ENCODE measurements at regions of chr12 and their contacts with region 1.

Region 1: DNA sequence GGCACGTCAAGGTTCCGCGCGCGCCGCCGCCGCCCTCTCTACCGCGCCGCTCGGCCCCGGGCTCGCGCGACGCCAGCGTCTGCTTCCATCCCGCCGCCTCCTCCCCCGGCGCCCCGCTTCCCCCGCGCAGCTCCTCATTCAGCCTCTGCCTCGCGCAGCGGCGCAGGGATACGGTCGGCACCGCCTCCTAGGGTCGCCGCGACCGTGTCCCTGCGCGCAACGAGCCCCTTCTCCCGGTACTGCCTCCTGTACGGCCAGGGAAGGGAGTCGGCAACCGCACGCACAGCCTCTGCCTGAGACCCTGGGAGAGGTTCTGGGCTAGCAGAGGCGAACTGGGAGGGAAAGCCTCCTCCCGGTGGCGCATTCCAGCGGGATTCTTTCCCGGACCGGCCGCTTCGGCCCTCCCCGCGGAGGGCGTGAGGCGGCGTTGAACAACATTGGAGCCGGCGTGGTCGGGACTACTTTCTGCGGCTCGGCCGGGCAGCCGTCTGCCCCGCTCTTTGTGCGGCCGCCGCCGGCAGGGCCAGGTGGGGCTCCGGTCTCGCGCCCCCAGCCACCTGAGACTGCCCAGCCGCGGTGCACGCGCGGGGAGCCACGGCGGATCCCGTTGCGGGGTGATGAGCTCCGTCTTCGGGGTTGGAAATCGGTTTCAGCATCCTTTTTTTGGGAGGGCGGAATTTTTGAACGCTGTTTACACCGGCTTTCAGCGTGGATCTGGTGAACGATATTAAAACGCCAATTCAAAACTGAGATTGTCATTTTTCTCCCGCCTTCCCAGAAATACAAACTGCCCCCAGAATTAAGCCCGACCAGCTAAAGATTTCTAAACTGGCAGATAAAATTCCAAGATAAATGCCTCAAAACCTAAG is at the start of gene LRP6:
- DNase-seq: peak; percentile 80
- ATAC-seq: peak; percentile 94
- H3K4me3 ChIP-seq: peak within 1 kb of the TSS; percentile 90 to 95 (median 93)
- H3K27ac ChIP-seq: peak within 1 kb of the TSS; percentile 100
- H3K4me1 ChIP-seq: peaks cover 33% of the 10 kb centered on the region
- H3K27me3 ChIP-seq: no peaks in the 10 kb centered on the region; a peak in 1 of 5 replicates
- CTCF ChIP-seq: peak; percentile 31; the same call in 1 of the 2 replicates
- EP300 ChIP-seq: no peak
- POLR2A ChIP-seq: peak; percentile 69 to 72
- RAD21 ChIP-seq: 0 out of 2 replicates have a peak, but pooled peaks have one; percentile 20
- total RNA-seq, gene LRP6: 31.7 and 42.0 TPM in 2 replicates

Region 2: GRCh38 chr12:12167847-12168246 is 99.3 kb before region 1 on chr12:
- CTCF ChIA-PET with region 1: no interaction called
- POLR2A ChIA-PET with region 1: no interaction called
- in situ Hi-C with region 1: no loop called
- intact Hi-C with region 1: loop called (anchors 5 kb)
- DNase-seq: peak; percentile 45
- ATAC-seq: peak; percentile 78
- H3K4me3 ChIP-seq: no peak overlapping the region; a peak in 2 of 6 replicates
- H3K27ac ChIP-seq: no peak overlapping the region
- H3K4me1 ChIP-seq: peaks cover 43% of the 10 kb centered on the region
- H3K27me3 ChIP-seq: no peaks in the 10 kb centered on the region
- CTCF ChIP-seq: no peak
- EP300 ChIP-seq: peak in 1 of 2 experiments; percentile 34; a peak in 1 of 4 replicates
- POLR2A ChIP-seq: no peak
- RAD21 ChIP-seq: no peak

Region 3: DNA sequence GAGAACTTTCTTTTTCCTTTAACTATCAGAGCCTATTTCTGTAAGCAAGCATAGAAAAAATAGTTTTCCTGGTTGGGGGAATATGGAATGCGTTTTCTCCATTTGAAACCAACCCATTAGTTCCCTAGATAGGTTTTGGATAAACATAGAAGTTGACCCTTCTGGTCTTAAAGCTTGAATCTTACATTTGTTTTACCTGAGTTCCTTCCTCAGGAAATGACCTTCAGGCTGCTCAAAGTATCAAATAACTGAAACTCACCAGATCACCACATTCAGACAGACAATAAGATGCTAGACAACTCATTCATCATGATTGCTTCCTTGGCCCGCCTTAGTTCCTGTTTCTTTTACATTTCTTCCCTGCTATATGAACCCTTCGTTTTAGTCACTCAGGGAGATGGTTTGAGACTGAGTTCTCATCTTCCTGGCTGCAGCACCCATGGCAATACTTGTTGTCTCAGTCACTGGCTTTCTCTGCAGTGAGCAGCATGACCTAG is 52.4 kb before region 1 on chr12:
- CTCF ChIA-PET with region 1: no interaction called
- POLR2A ChIA-PET with region 1: no interaction called
- in situ Hi-C with region 1: no loop called
- intact Hi-C with region 1: loop called (anchors 5 kb)
- DNase-seq: peak; percentile 24
- ATAC-seq: peak; percentile 81
- H3K4me3 ChIP-seq: peak overlapping the region in 1 of 3 experiments; percentile 20; a peak in 3 of 6 replicates
- H3K27ac ChIP-seq: peak overlapping the region; percentile 84
- H3K4me1 ChIP-seq: peaks cover 94% of the 10 kb centered on the region
- H3K27me3 ChIP-seq: no peaks in the 10 kb centered on the region; a peak in 1 of 5 replicates
- CTCF ChIP-seq: no peak
- EP300 ChIP-seq: peak in 1 of 2 experiments; percentile 27; a peak in 1 of 4 replicates
- POLR2A ChIP-seq: no peak
- RAD21 ChIP-seq: no peak

Region 4: GRCh38 chr12:12319451-12320183 is 52.5 kb after region 1 on chr12:
- CTCF ChIA-PET with region 1: no interaction called
- POLR2A ChIA-PET with region 1: interaction called, 23 read pairs
- in situ Hi-C with region 1: loop called (anchors 10 kb)
- intact Hi-C with region 1: loop called (anchors 1 kb)
- DNase-seq: peak; percentile 30
- ATAC-seq: peak; percentile 30; the same call in 1 of the 3 replicates
- H3K4me3 ChIP-seq: peak overlapping the region; percentile 43 to 57 (median 54); a peak in 4 of 6 replicates
- H3K27ac ChIP-seq: peak overlapping the region; percentile 63
- H3K4me1 ChIP-seq: peaks cover 48% of the 10 kb centered on the region
- H3K27me3 ChIP-seq: no peaks in the 10 kb centered on the region
- CTCF ChIP-seq: no peak
- EP300 ChIP-seq: no peak
- POLR2A ChIP-seq: no peak
- RAD21 ChIP-seq: no peak

Region 5: DNA sequence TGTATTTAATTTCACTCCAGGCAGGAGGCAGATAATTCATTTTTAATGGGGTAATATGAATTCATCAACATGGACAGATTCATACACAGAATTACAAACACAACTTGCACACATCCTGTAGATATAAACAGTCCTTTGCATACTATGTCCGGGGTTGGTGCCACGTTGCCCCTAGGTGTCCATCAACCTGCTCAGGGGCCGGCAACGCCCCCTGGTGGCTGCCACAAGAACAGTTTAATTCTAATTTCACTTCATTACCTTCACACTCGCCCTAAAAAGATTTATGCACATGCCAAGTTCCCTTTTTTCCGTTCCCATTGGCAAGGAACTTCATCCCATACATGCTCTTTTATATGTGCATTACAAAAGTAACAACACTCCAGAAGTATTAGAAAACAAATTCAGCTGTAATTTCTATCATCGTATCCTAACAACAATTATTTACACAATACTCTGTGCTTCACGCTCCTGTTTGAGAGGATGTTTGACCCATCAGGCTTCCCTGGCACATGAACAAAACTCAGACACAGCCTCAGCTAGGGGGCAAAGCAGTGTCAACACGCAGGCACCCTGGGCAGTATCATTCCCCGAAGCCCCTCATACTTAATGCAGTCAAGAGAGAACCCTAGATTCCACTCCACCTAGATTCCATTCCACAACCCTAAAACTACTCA is 67.4 kb after region 1 on chr12:
- CTCF ChIA-PET with region 1: no interaction called
- POLR2A ChIA-PET with region 1: no interaction called
- in situ Hi-C with region 1: loop called (anchors 10 kb)
- intact Hi-C with region 1: loop called (anchors 2 kb)
- DNase-seq: peak; percentile 53
- ATAC-seq: peak; percentile 88
- H3K4me3 ChIP-seq: no peak overlapping the region
- H3K27ac ChIP-seq: no peak overlapping the region
- H3K4me1 ChIP-seq: peaks cover 34% of the 10 kb centered on the region
- H3K27me3 ChIP-seq: no peaks in the 10 kb centered on the region
- CTCF ChIP-seq: peak; percentile 82
- EP300 ChIP-seq: no peak
- POLR2A ChIP-seq: no peak
- RAD21 ChIP-seq: peak; percentile 62; the same call in 1 of the 2 replicates

Region 6: DNA sequence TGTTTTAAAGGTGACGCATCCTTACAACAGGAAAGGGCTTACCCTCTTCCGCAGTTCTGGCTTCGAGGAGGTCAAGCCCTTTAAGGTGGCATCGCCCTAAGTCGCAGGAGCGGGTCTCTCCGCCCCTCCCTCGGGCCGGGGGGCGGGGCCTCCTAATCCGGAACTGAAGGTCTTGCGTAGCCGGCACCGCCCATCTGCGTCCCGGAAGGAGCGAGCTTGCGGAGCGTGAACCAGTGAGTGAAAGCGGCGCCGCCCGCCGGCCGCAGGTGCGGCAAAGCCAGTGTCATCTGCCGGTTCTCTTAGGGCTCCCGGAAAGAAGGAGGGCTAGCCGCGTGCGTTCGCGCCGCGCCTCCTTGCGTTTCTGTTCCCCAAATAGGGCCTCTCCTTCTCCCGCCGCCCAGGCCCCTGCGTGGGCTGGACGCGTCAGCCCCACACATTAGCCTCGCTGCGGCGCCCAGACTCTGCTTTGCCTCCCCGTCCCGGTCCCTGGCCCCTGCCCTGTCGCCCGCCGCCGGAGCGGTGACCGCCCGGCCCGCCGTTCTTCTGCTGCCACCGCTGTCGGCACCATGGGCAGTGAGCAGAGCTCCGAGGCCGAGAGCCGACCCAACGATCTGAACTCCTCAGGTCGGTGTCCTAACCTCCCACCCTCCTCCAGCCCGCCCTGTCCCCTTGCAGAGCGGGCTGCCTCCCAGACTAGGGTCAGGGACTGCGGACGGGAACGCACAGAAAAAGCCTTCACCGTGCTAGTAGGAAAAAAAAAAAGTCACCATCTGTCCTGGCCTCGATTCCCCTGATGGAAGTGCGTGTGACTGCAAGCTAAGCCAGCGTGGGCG is 90.0 kb after region 1 on chr12 and contains the start of gene BORCS5:
- CTCF ChIA-PET with region 1: no interaction called
- POLR2A ChIA-PET with region 1: interaction called, 12 read pairs
- in situ Hi-C with region 1: no loop called
- intact Hi-C with region 1: no loop called
- DNase-seq: peak; percentile 89
- ATAC-seq: peak; percentile 96
- H3K4me3 ChIP-seq: peak within 1 kb of the TSS; percentile 83 to 93 (median 83)
- H3K27ac ChIP-seq: peak within 1 kb of the TSS; percentile 84
- H3K4me1 ChIP-seq: peaks cover 47% of the 10 kb centered on the region
- H3K27me3 ChIP-seq: no peaks in the 10 kb centered on the region
- CTCF ChIP-seq: peak; percentile 77
- EP300 ChIP-seq: no peak
- POLR2A ChIP-seq: peak; percentile 96 to 97
- RAD21 ChIP-seq: peak; percentile 54
- total RNA-seq, gene BORCS5: 3.9 and 8.2 TPM in 2 replicates

Measured in HepG2 (cell line).